WTC11 (cell line): ENCODE measurements at regions of chr2 and their contacts with region 1.

Region 1: DNA sequence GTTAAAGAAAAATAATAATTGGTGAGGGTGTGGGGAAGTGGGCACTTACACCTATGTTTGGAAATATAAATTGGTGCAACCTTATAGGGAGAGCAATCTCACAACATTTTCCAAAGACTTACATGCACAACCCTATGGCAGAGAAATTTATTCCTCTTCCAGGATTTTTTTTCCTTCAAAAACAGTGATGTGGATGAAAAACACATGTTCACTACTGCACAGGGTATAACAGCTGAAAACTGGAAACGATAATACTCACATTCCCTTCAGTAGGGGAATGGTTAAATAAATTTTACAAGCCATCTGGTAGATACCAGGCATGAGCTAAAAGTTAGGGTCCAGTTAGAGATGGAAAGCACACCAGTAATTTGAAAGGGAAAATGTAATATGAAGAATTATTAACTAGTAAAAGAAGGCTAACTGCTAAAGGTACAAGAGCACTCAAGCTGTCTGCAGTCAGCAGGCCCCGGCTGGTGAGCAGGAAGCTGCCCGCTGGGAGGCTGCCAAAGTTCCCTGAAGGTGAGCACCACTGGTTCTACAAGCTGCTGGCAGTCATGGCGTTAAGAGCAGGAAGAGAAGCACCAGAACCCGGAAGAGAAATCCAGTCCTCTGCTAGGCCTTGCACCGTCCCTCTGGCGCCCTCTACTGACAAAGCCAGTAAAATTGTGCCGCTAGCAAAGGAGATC is 28.4 kb upstream of the CASP8 start:
- DNase-seq: peak; percentile 89
- ATAC-seq: peak; percentile 82
- H3K4me3 Mint-ChIP-seq: no peak overlapping the region
- H3K27ac Mint-ChIP-seq: no peak overlapping the region
- H3K4me1 Mint-ChIP-seq: peaks cover 20% of the 10 kb centered on the region
- H3K27me3 Mint-ChIP-seq: peaks cover 4% of the 10 kb centered on the region; the same call in 1 of the 2 replicates
- CTCF ChIP-seq: peak; percentile 76

Region 2: GRCh38 chr2:200901459-200902072 is 330.4 kb before region 1 on chr2:
- CTCF ChIA-PET with region 1: interaction called, 19 read pairs
- POLR2A ChIA-PET with region 1: no interaction called
- DNase-seq: peak; percentile 61
- ATAC-seq: peak; percentile 98
- H3K4me3 Mint-ChIP-seq: no peak overlapping the region
- H3K27ac Mint-ChIP-seq: peak overlapping the region; percentile 64; the same call in 1 of the 2 replicates
- H3K4me1 Mint-ChIP-seq: no peaks in the 10 kb centered on the region
- H3K27me3 Mint-ChIP-seq: no peaks in the 10 kb centered on the region
- CTCF ChIP-seq: peak; percentile 64

Region 3: DNA sequence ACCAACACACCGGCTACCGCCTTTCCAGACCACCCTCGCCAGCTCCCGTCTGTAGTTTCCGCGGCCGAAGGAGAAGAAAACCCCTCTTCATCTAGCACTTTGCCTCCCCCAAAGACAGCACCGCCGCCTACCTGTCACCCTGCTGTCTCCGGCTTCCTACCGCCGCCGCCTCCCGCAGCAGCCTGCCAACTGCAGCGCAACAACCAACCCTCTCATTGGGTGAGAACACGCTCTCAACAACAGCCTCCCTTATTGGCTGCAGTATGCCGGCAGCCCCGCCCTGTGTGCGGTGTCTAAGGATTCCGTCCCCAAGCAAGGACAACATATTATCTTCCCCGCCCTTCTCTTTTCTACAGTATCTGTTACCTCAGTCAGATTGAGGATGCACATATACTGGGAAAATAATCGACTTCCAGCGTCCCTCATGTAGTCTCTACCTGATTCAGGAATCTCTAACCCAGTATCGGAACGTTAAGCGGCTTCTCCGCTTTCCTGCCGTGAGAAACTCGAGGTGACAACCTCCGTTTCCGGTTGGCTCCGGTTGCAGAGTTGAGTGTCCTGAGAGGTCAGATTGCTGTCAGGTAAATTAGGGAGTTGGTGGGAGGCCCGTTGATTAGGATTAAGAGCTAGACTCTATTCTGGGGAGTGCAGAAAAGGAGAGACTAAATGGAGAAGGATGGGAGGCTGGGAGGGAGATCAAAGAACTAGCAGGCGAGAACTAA is 160.3 kb before region 1 on chr2 and contains the starts of genes HYCC2 and NDUFB3:
- CTCF ChIA-PET with region 1: interaction called, 17 read pairs
- POLR2A ChIA-PET with region 1: no interaction called
- DNase-seq: peak; percentile 89
- ATAC-seq: peak; percentile 98
- H3K4me3 Mint-ChIP-seq: peak within 1 kb of the TSS; percentile 95
- H3K27ac Mint-ChIP-seq: peak within 1 kb of the TSS; percentile 93
- H3K4me1 Mint-ChIP-seq: peaks cover 17% of the 10 kb centered on the region
- H3K27me3 Mint-ChIP-seq: no peaks in the 10 kb centered on the region
- CTCF ChIP-seq: no peak
- total RNA-seq, gene HYCC2: 8.8 to 10.4 TPM (median 9.1 TPM) in 3 replicates
- total RNA-seq, gene NDUFB3: 65.5 to 70.9 TPM (median 66.8 TPM) in 3 replicates

Region 4: GRCh38 chr2:201158111-201158929 is 73.6 kb before region 1 on chr2:
- CTCF ChIA-PET with region 1: interaction called, 20 read pairs
- POLR2A ChIA-PET with region 1: interaction called, 3 read pairs
- DNase-seq: peak; percentile 51
- ATAC-seq: peak; percentile 92
- H3K4me3 Mint-ChIP-seq: no peak overlapping the region
- H3K27ac Mint-ChIP-seq: peak overlapping the region; percentile 91
- H3K4me1 Mint-ChIP-seq: peaks cover 13% of the 10 kb centered on the region
- H3K27me3 Mint-ChIP-seq: no peaks in the 10 kb centered on the region
- CTCF ChIP-seq: peak; percentile 7; the same call in 1 of the 2 replicates

Region 5: DNA sequence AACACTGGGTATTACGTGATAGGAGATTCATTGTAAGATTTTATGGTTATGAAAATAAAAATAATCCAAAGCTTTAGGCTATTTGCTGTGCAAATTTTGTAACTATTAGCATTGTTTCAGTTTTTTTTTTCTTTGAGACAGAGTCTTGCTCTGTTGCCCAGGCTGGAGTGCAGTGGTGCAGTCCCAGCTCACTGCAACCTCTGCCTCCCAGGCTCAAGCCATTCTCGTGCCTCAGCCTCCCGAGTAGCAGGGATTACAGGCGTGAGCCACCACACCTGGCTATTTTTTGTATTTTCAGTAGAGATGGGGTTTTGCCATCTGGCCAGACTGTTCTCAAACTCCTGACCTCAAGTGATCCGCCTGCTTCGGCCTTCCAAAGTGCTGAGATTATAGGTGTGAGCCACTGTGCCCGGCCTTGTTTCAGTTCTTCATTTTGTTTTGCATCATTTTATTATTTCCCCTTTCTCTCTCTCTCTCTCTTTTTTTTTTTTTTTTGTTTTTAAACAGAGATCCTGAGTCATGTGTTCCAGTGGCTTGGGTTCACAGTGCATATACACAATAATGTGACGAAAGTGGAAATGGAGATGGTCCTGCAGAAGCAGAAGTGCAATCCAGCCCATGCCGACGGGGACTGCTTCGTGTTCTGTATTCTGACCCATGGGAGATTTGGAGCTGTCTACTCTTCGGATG is 23.2 kb before region 1 on chr2:
- CTCF ChIA-PET with region 1: interaction called, 14 read pairs
- POLR2A ChIA-PET with region 1: no interaction called
- DNase-seq: no peak
- ATAC-seq: no peak
- H3K4me3 Mint-ChIP-seq: no peak overlapping the region
- H3K27ac Mint-ChIP-seq: no peak overlapping the region
- H3K4me1 Mint-ChIP-seq: peaks cover 3% of the 10 kb centered on the region
- H3K27me3 Mint-ChIP-seq: no peaks in the 10 kb centered on the region; the same call in 1 of the 2 replicates
- CTCF ChIP-seq: no peak

Region 6: GRCh38 chr2:201244829-201245228 is 12.9 kb after region 1 on chr2:
- CTCF ChIA-PET with region 1: interaction called, 12 read pairs
- POLR2A ChIA-PET with region 1: no interaction called
- DNase-seq: no peak
- ATAC-seq: no peak
- H3K4me3 Mint-ChIP-seq: no peak overlapping the region
- H3K27ac Mint-ChIP-seq: no peak overlapping the region
- H3K4me1 Mint-ChIP-seq: no peaks in the 10 kb centered on the region
- H3K27me3 Mint-ChIP-seq: no peaks in the 10 kb centered on the region; the same call in 1 of the 2 replicates
- CTCF ChIP-seq: no peak

Region 7: DNA sequence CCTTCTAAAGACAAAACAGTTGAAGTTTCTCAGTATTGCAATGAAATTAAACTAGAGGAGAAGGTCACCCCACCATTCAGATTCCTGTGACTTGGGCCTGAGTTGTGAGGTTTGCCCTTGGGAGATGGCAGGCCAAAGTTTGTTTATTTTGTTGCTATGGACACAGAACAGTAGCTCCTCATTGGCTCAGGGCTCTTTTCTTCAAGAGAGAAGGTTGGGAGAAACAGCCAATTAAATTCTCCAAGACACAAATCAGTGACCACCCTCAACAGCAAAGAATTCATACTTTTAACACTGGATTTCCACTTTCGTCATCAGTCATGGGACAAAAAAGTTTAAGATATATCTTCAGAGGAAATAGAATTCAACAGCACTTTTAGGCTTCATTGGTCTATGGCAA is 125.3 kb after region 1 on chr2 and contains the start of gene FLACC1:
- CTCF ChIA-PET with region 1: interaction called, 11 read pairs
- POLR2A ChIA-PET with region 1: no interaction called
- DNase-seq: peak; percentile 38
- ATAC-seq: peak; percentile 97
- H3K4me3 Mint-ChIP-seq: no peak within 1 kb of the TSS
- H3K27ac Mint-ChIP-seq: no peak within 1 kb of the TSS; the same call in 1 of the 2 replicates
- H3K4me1 Mint-ChIP-seq: peaks cover 5% of the 10 kb centered on the region
- H3K27me3 Mint-ChIP-seq: no peaks in the 10 kb centered on the region
- CTCF ChIP-seq: no peak
- total RNA-seq, gene FLACC1: 0.17 to 0.62 TPM (median 0.23 TPM) in 3 replicates

Region 8: GRCh38 chr2:201964631-201965206 is 732.8 kb after region 1 on chr2:
- CTCF ChIA-PET with region 1: no interaction called
- POLR2A ChIA-PET with region 1: no interaction called
- DNase-seq: no peak
- ATAC-seq: no peak
- H3K4me3 Mint-ChIP-seq: no peak overlapping the region
- H3K27ac Mint-ChIP-seq: no peak overlapping the region
- H3K4me1 Mint-ChIP-seq: peaks cover 70% of the 10 kb centered on the region
- H3K27me3 Mint-ChIP-seq: no peaks in the 10 kb centered on the region
- CTCF ChIP-seq: no peak